Calu3 (cell line): ENCODE measurements at regions of chr13 and their contacts with region 1.

Region 1: GRCh38 chr13:102141625-102142472 is 260.0 kb downstream of the FGF14 start:
- DNase-seq: no peak
- H3K4me3 Mint-ChIP-seq: no peak overlapping the region
- H3K27ac Mint-ChIP-seq: no peak overlapping the region
- H3K4me1 Mint-ChIP-seq: no peaks in the 10 kb centered on the region
- H3K27me3 Mint-ChIP-seq: no peaks in the 10 kb centered on the region
- CTCF ChIP-seq: no peak

Region 2: GRCh38 chr13:100566543-100566942 is 1575.3 kb before region 1 on chr13:
- CTCF ChIA-PET with region 1: no interaction called
- intact Hi-C with region 1: no loop called
- DNase-seq: no peak
- H3K4me3 Mint-ChIP-seq: no peak overlapping the region
- H3K27ac Mint-ChIP-seq: no peak overlapping the region
- H3K4me1 Mint-ChIP-seq: no peaks in the 10 kb centered on the region
- H3K27me3 Mint-ChIP-seq: no peaks in the 10 kb centered on the region
- CTCF ChIP-seq: no peak

Region 3: GRCh38 chr13:101875717-101876393 is 266.0 kb before region 1 on chr13:
- CTCF ChIA-PET with region 1: no interaction called
- intact Hi-C with region 1: no loop called
- DNase-seq: peak; percentile 53
- H3K4me3 Mint-ChIP-seq: no peak overlapping the region
- H3K27ac Mint-ChIP-seq: no peak overlapping the region
- H3K4me1 Mint-ChIP-seq: no peaks in the 10 kb centered on the region
- H3K27me3 Mint-ChIP-seq: peaks cover 15% of the 10 kb centered on the region
- CTCF ChIP-seq: no peak

Region 4: GRCh38 chr13:102003848-102004570 is 137.8 kb before region 1 on chr13:
- CTCF ChIA-PET with region 1: no interaction called
- intact Hi-C with region 1: no loop called
- DNase-seq: no peak
- H3K4me3 Mint-ChIP-seq: no peak overlapping the region
- H3K27ac Mint-ChIP-seq: no peak overlapping the region
- H3K4me1 Mint-ChIP-seq: no peaks in the 10 kb centered on the region
- H3K27me3 Mint-ChIP-seq: no peaks in the 10 kb centered on the region
- CTCF ChIP-seq: no peak

Region 5: DNA sequence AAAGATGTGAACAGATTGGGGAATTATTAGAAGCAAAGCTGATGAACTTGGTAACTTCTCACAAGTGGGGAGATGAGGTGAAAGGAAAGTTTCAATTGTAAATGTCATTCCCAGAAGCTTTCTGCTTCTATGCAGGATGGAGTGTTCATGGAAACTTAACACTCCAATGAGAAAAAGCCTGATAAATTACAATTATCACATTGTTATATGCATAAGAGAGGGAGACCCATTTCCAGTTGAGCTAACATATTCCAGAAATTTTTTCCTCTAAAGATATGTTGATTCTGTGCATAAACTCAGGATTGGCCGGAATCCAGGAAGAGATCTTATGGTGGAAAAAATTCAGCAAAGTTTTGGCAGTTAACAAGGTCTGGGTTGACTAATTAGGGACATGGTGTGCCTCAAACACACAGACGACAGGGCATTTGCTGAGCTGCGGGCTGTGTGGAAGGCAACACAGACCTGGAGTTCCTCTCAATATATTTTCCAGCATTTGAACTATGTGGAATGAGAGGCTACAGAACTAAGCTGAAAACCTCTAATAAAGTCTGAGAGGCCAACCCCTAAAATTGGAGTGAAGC is 324.9 kb after region 1 on chr13:
- CTCF ChIA-PET with region 1: no interaction called
- intact Hi-C with region 1: loop called (anchors 10 kb)
- DNase-seq: no peak
- H3K4me3 Mint-ChIP-seq: no peak overlapping the region
- H3K27ac Mint-ChIP-seq: no peak overlapping the region
- H3K4me1 Mint-ChIP-seq: no peaks in the 10 kb centered on the region
- H3K27me3 Mint-ChIP-seq: no peaks in the 10 kb centered on the region
- CTCF ChIP-seq: no peak